ENCODE measurements at regions of chr1 and their contacts with region 1.

Region 1: DNA sequence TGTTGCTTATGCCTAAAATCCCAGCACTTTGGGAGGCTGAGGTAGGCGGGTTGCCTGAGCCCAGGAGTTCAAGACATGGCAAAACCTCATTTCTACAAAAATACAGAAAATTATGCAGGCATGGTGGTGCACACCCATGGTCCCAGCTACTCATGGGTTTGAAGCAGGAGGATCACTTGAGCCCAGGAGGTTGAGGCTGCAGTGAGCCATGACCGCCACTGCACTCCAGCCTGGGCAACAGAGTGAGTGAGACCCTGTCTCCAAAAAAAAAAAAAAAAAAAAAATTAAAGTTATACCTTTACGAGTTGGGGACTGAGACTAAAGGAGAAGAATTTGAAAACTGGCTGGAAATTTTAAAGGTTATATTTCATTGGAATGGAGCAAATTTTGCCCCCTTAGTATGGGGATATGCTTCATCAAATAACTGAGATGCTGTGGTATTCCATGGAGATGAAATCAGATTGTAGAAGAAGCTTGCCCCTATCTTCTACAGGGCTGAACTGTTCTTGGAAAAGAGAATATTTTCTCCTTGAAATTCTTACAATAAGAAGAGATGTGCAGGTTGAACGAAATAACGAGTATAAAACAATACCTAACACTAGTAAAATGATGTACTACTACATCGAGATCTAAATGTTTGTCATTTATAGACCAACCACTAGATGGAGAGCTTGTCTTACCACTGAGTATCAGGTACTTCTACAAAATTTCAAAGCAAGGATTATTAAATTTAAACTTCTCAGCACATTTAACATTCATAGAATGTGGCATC is 34.9 kb upstream of the SCYL3 start:
- DNase-seq: no peak
- H3K4me3 Mint-ChIP-seq: no peak overlapping the region
- H3K27ac Mint-ChIP-seq: no peak overlapping the region
- H3K4me1 Mint-ChIP-seq: peaks cover 3% of the 10 kb centered on the region
- H3K27me3 Mint-ChIP-seq: no peaks in the 10 kb centered on the region

Region 2: GRCh38 chr1:170461762-170462384 is 533.2 kb after region 1 on chr1:
- CTCF ChIA-PET with region 1: interaction called, 4 read pairs
- intact Hi-C with region 1: loop called (anchors 2 kb)
- DNase-seq: no peak
- H3K4me3 Mint-ChIP-seq: no peak overlapping the region
- H3K27ac Mint-ChIP-seq: no peak overlapping the region
- H3K4me1 Mint-ChIP-seq: peaks cover 2% of the 10 kb centered on the region
- H3K27me3 Mint-ChIP-seq: peaks cover 27% of the 10 kb centered on the region

Region 3: DNA sequence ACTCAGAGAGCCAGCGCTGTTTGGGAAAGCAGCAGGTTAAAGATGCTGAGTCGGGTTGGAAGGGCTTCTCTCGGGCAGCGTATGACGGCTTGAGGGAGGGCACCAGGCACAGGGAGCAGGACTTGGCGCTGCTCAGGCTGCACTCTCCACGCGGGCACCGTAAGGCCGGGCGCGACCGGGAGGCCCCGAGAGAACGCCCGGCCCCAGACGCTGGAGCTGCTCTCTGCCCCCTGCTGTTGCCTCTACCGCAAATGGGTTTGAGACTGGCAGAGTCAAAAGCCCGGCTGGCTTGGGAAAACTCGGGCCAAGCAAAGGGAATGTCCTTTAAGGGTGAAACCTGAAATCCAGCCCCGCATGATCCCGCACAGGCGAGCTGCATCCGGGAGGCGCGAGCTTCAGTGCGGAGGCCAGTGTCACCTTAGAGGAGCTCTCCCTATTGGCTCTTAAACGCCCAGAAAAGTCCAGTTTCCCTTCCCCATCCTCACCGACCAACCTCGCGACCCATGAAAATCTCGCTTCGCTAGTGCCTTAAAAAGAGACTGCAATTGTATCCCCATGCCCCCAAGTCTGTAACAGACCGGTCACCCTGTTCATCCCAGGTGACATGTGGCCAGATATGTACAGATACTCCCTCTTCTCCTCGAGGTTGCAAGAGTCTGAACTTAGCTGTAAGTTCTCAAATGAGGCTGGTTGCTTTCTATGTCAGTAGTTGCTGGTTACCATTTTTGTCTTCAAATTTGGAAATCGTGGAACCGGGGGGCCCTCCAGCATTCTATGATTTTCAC is 736.4 kb after region 1 on chr1:
- CTCF ChIA-PET with region 1: no interaction called
- intact Hi-C with region 1: loop called (anchors 5 kb)
- DNase-seq: no peak
- H3K4me3 Mint-ChIP-seq: peak overlapping the region; percentile 27
- H3K27ac Mint-ChIP-seq: no peak overlapping the region
- H3K4me1 Mint-ChIP-seq: peaks cover 51% of the 10 kb centered on the region
- H3K27me3 Mint-ChIP-seq: peaks cover 81% of the 10 kb centered on the region

Region 4: GRCh38 chr1:170929835-170930554 is 1001.4 kb after region 1 on chr1:
- CTCF ChIA-PET with region 1: interaction called, 3 read pairs
- intact Hi-C with region 1: loop called (anchors 1 kb)
- DNase-seq: peak; percentile 11
- H3K4me3 Mint-ChIP-seq: no peak overlapping the region
- H3K27ac Mint-ChIP-seq: no peak overlapping the region
- H3K4me1 Mint-ChIP-seq: no peaks in the 10 kb centered on the region
- H3K27me3 Mint-ChIP-seq: peaks cover 9% of the 10 kb centered on the region

Region 5: GRCh38 chr1:171188388-171189266 is 1260.0 kb after region 1 on chr1:
- CTCF ChIA-PET with region 1: no interaction called
- intact Hi-C with region 1: loop called (anchors 5 kb)
- DNase-seq: peak; percentile 65
- H3K4me3 Mint-ChIP-seq: no peak overlapping the region
- H3K27ac Mint-ChIP-seq: no peak overlapping the region
- H3K4me1 Mint-ChIP-seq: no peaks in the 10 kb centered on the region
- H3K27me3 Mint-ChIP-seq: peaks cover 5% of the 10 kb centered on the region